ENCODE measurements at regions of chr3 and their contacts with region 1.

Region 1: GRCh38 chr3:28726840-28727239 is 378.2 kb upstream of the AZI2 start:
- DNase-seq: peak; percentile 54 to 66
- H3K4me3 ChIP-seq: no peak overlapping the region
- H3K4me3 Mint-ChIP-seq: no peak overlapping the region
- H3K27ac Mint-ChIP-seq: no peak overlapping the region
- H3K4me1 ChIP-seq: no peaks in the 10 kb centered on the region; the same call in 1 of the 2 replicates
- H3K4me1 Mint-ChIP-seq: no peaks in the 10 kb centered on the region
- H3K27me3 ChIP-seq: no peaks in the 10 kb centered on the region
- H3K27me3 Mint-ChIP-seq: no peaks in the 10 kb centered on the region
- CTCF ChIP-seq: peak; percentile 36 to 68

Region 2: DNA sequence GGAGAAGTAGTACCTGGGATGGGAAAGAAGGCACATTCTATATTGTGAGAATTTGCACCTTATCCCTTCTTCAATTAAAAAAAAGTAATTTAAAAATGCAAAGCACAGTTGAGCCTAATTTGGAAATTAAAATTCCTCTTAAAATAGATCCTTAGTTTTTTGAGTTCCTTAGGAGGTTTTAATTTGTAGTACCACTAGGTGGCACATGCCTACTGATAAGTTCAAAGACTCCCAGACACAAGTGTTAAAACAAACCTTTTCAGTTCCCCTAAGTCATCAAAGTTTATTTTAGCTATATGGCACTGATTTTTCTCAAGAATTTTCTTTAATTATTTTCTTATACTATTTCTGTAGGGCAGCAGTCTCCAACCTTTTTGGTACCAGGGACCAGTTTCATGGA is 250.6 kb before region 1 on chr3:
- CTCF ChIA-PET with region 1: no interaction called
- POLR2A ChIA-PET with region 1: no interaction called
- intact Hi-C with region 1: loop called (anchors 1 kb)
- DNase-seq: peak in 1 of 2 experiments; percentile 15
- H3K4me3 ChIP-seq: no peak overlapping the region
- H3K4me3 Mint-ChIP-seq: no peak overlapping the region
- H3K27ac Mint-ChIP-seq: no peak overlapping the region
- H3K4me1 ChIP-seq: no peaks in the 10 kb centered on the region
- H3K4me1 Mint-ChIP-seq: no peaks in the 10 kb centered on the region
- H3K27me3 ChIP-seq: no peaks in the 10 kb centered on the region
- H3K27me3 Mint-ChIP-seq: no peaks in the 10 kb centered on the region
- CTCF ChIP-seq: peak; percentile 51 to 55

Region 3: GRCh38 chr3:28667646-28668621 is 58.9 kb before region 1 on chr3:
- CTCF ChIA-PET with region 1: interaction called, 15 read pairs
- POLR2A ChIA-PET with region 1: no interaction called
- intact Hi-C with region 1: loop called (anchors 1 kb)
- DNase-seq: peak; percentile 57 to 65
- H3K4me3 ChIP-seq: no peak overlapping the region
- H3K4me3 Mint-ChIP-seq: no peak overlapping the region
- H3K27ac Mint-ChIP-seq: no peak overlapping the region
- H3K4me1 ChIP-seq: 0 out of 2 replicates have a peak, but pooled peaks cover 6% of the 10 kb centered on the region
- H3K4me1 Mint-ChIP-seq: no peaks in the 10 kb centered on the region
- H3K27me3 ChIP-seq: no peaks in the 10 kb centered on the region
- H3K27me3 Mint-ChIP-seq: peaks cover 9% of the 10 kb centered on the region
- CTCF ChIP-seq: peak; percentile 61 to 70

Region 4: GRCh38 chr3:28678086-28678485 is 48.8 kb before region 1 on chr3:
- CTCF ChIA-PET with region 1: no interaction called
- POLR2A ChIA-PET with region 1: no interaction called
- intact Hi-C with region 1: no loop called
- DNase-seq: no peak
- H3K4me3 ChIP-seq: no peak overlapping the region
- H3K4me3 Mint-ChIP-seq: no peak overlapping the region
- H3K27ac Mint-ChIP-seq: no peak overlapping the region
- H3K4me1 ChIP-seq: no peaks in the 10 kb centered on the region
- H3K4me1 Mint-ChIP-seq: no peaks in the 10 kb centered on the region
- H3K27me3 ChIP-seq: no peaks in the 10 kb centered on the region
- H3K27me3 Mint-ChIP-seq: peaks cover 2% of the 10 kb centered on the region
- CTCF ChIP-seq: no peak

Region 5: GRCh38 chr3:28780480-28780879 is 53.6 kb after region 1 on chr3:
- CTCF ChIA-PET with region 1: no interaction called
- POLR2A ChIA-PET with region 1: no interaction called
- intact Hi-C with region 1: loop called (anchors 1 kb)
- DNase-seq: peak; percentile 33 to 41
- H3K4me3 ChIP-seq: no peak overlapping the region
- H3K4me3 Mint-ChIP-seq: no peak overlapping the region
- H3K27ac Mint-ChIP-seq: no peak overlapping the region
- H3K4me1 ChIP-seq: peaks cover 13% of the 10 kb centered on the region; the same call in 1 of the 2 replicates
- H3K4me1 Mint-ChIP-seq: peaks cover 7% of the 10 kb centered on the region
- H3K27me3 ChIP-seq: no peaks in the 10 kb centered on the region
- H3K27me3 Mint-ChIP-seq: no peaks in the 10 kb centered on the region
- CTCF ChIP-seq: no peak